ENCODE measurements at regions of chr9 and their contacts with region 1.

Region 1: GRCh38 chr9:121841771-121842611 is 190.6 kb downstream of the DAB2IP start:
- DNase-seq: no peak
- ATAC-seq: no peak
- H3K4me3 ChIP-seq: no peak overlapping the region
- H3K27ac ChIP-seq: no peak overlapping the region
- H3K4me1 ChIP-seq: no peaks in the 10 kb centered on the region
- H3K27me3 ChIP-seq: no peaks in the 10 kb centered on the region
- CTCF ChIP-seq: no peak

Region 2: GRCh38 chr9:121735065-121735789 is 106.8 kb before region 1 on chr9:
- CTCF ChIA-PET with region 1: no interaction called
- POLR2A ChIA-PET with region 1: no interaction called
- in situ Hi-C with region 1: no loop called
- intact Hi-C with region 1: no loop called
- DNase-seq: no peak
- ATAC-seq: peak; percentile 80
- H3K4me3 ChIP-seq: peak overlapping the region in 1 of 2 experiments; percentile 45; a peak in 2 of 4 replicates
- H3K27ac ChIP-seq: peak overlapping the region; percentile 59
- H3K4me1 ChIP-seq: peaks cover 22% of the 10 kb centered on the region
- H3K27me3 ChIP-seq: no peaks in the 10 kb centered on the region
- CTCF ChIP-seq: peak; percentile 77

Region 3: DNA sequence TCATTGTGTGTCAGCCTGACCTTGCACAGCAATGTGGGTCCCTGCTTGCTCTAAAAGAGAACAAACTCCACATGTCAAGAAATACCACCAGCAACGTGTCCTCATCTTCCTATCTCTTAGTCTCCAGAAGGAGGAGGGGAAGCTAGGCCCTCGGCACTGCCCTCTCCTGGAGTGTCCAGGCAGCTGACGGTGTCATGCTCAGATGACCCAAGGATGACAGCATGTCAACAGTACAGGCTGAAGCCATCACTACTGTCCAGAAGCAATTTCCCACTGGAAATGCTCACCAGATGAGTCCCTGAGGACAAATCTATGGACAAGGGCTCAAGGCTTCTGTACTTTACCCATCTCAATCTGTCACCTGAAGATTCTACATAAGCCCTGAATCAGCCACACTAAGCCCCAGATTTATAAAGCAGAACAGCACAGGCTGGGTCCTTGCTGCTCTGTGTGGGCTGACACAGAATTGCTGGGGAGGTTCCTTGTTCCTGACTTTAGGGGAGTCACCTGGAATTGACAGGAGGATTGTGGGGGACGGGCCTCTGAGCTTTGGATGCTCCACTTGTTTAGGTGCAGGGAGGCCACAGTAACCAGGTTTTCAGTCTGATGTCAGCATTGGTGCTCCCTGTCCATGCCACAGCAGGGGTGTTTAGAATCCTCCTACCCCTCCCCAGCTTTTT is 19.6 kb after region 1 on chr9:
- CTCF ChIA-PET with region 1: no interaction called
- POLR2A ChIA-PET with region 1: interaction called, 12 read pairs
- in situ Hi-C with region 1: no loop called
- intact Hi-C with region 1: no loop called
- DNase-seq: peak; percentile 7
- ATAC-seq: peak; percentile 82; the same call in 1 of the 2 replicates
- H3K4me3 ChIP-seq: no peak overlapping the region
- H3K27ac ChIP-seq: no peak overlapping the region
- H3K4me1 ChIP-seq: no peaks in the 10 kb centered on the region
- H3K27me3 ChIP-seq: no peaks in the 10 kb centered on the region
- CTCF ChIP-seq: peak; percentile 66

Region 4: DNA sequence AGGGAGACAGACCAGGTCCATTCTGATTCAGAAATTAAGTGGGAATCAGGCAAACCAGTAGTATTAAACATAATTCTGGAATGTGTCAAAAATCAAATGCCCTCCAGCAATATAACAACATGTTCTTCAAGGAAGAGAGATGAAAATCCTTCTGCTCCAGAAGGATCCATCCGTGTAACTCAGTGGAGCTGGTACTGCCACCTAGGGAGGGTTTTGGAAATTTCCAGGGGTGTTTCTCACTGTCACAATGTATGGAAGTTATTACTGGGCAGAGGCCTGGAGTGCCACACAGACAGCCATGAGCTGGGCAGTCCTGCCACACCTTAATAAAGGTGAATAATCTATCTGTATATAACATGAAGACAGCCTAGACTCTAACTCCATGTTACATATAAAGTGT is 163.6 kb after region 1 on chr9:
- CTCF ChIA-PET with region 1: no interaction called
- POLR2A ChIA-PET with region 1: no interaction called
- in situ Hi-C with region 1: no loop called
- intact Hi-C with region 1: no loop called
- DNase-seq: no peak
- ATAC-seq: peak; percentile 92
- H3K4me3 ChIP-seq: no peak overlapping the region
- H3K27ac ChIP-seq: no peak overlapping the region
- H3K4me1 ChIP-seq: no peaks in the 10 kb centered on the region; the same call in 1 of the 2 replicates
- H3K27me3 ChIP-seq: no peaks in the 10 kb centered on the region
- CTCF ChIP-seq: peak; percentile 72